ENCODE measurements at regions of chr17 and their contacts with region 1.

Region 1: GRCh38 chr17:17681187-17681848 is at the start of gene RAI1:
- DNase-seq: peak; percentile 85
- H3K4me3 ChIP-seq: peak within 1 kb of the TSS; percentile 92
- H3K27ac ChIP-seq: peak within 1 kb of the TSS; percentile 76
- H3K4me1 ChIP-seq: peaks cover 52% of the 10 kb centered on the region
- CTCF ChIP-seq: peak; percentile 67; the same call in 1 of the 2 replicates
- total RNA-seq, gene RAI1: 17.1 and 20.1 TPM in 2 replicates

Region 2: GRCh38 chr17:17462048-17462824 is 219.1 kb before region 1 on chr17:
- CTCF ChIA-PET with region 1: no interaction called
- POLR2A ChIA-PET with region 1: no interaction called
- intact Hi-C with region 1: no loop called
- DNase-seq: no peak
- H3K4me3 ChIP-seq: no peak overlapping the region
- H3K27ac ChIP-seq: no peak overlapping the region
- H3K4me1 ChIP-seq: no peaks in the 10 kb centered on the region
- CTCF ChIP-seq: no peak

Region 3: DNA sequence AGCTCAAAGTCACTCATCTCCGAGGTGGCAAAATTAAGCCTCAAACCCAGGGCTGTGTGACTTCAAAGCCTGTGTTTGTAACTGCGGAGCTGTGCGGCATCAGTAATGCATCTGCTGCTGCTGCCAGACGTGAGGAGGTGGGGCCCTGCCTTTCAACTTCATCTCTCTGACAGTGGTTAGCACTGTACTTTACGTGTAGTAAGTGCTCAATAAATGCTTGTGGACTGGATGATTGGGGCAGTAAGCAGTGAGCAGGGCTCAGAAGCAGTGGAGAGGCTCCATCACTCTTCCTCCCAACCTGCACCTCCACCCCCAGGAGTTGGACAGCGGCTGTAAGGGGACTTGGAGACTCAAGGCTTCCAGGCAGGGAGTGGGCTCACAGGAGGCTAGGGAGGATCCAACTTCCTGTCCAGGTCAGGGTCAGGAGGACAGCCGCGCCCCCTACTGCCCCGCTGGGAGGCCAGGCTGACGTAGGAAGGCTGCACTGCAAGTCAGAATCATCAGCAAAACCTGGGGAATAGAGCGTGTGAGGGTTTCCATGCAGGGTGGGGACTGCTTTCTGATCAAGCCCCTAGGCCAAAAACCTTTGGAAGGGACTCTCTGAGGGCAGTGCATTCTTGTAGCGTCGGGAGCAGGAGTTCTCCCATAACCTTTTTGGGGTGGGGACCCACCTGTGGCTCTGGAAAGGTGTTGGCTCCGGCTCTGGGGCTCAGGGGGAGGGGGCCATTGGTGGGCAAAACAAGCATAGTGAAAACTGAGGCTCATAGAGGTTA is 21.7 kb after region 1 on chr17:
- CTCF ChIA-PET with region 1: no interaction called
- POLR2A ChIA-PET with region 1: no interaction called
- intact Hi-C with region 1: no loop called
- DNase-seq: no peak
- H3K4me3 ChIP-seq: no peak overlapping the region
- H3K27ac ChIP-seq: no peak overlapping the region
- H3K4me1 ChIP-seq: peaks cover 27% of the 10 kb centered on the region
- CTCF ChIP-seq: no peak

Region 4: GRCh38 chr17:17752089-17752820 is 70.9 kb after region 1 on chr17:
- CTCF ChIA-PET with region 1: no interaction called
- POLR2A ChIA-PET with region 1: interaction called, 4 read pairs
- intact Hi-C with region 1: loop called (anchors 1 kb)
- DNase-seq: peak; percentile 96
- H3K4me3 ChIP-seq: peak overlapping the region; percentile 74
- H3K27ac ChIP-seq: peak overlapping the region; percentile 98
- H3K4me1 ChIP-seq: peaks cover 88% of the 10 kb centered on the region
- CTCF ChIP-seq: peak; percentile 70

Region 5: DNA sequence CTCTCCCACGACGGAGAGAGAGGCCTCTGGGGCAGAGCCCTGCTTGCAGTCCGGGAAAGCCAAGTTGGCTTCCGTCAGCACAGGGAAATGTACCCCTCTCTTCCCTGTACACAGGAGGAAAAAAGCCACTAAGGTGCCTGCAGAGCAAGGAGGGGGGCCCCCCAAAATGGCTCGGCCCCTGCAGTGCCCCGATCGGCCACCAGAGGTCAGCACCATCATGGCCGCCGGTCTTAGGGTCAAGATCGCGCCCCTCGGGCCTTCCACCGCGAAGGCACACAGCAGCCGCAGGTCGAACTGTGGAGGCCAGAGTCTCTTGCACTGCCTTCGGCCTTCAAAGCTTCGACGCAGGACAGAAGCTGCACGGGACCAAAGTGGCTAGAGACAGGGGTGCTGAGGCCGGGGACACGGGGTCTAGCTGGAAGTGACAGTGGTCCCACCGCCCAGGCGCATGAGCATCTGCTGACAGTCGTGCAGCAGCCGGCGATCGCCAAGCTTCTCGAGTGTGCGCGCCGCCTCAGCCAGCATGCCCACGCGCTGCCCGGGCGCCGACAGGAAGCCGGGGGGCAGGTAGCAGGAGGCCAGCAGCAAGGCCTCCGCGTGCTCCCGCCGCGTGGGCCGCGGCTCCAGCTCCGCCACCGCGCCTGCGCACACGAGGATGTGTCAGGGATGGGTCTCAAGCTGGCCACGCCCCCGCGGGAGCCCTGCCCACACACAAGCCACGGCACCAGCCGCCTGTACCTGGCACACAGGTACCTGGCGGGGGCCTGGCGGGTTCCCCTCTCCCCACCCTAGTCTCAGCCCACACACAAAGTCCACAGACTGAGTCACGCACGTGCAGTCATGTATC is 131.1 kb after region 1 on chr17:
- CTCF ChIA-PET with region 1: no interaction called
- POLR2A ChIA-PET with region 1: no interaction called
- intact Hi-C with region 1: loop called (anchors 2 kb)
- DNase-seq: peak; percentile 60
- H3K4me3 ChIP-seq: no peak overlapping the region
- H3K27ac ChIP-seq: no peak overlapping the region
- H3K4me1 ChIP-seq: peaks cover 20% of the 10 kb centered on the region
- CTCF ChIP-seq: peak; percentile 96

Region 6: GRCh38 chr17:17919169-17920107 is 238.1 kb after region 1 on chr17:
- CTCF ChIA-PET with region 1: interaction called, 3 read pairs
- POLR2A ChIA-PET with region 1: interaction called, 6 read pairs
- intact Hi-C with region 1: loop called (anchors 1 kb)
- DNase-seq: peak; percentile 75
- H3K4me3 ChIP-seq: no peak overlapping the region
- H3K27ac ChIP-seq: no peak overlapping the region
- H3K4me1 ChIP-seq: peaks cover 8% of the 10 kb centered on the region
- CTCF ChIP-seq: peak; percentile 97